Mammary epithelial cell (primary cell): ENCODE measurements at regions of chr22 and their contacts with region 1.

Region 1: GRCh38 chr22:49106096-49106841 is 721.4 kb downstream of the BRD1 start:
- DNase-seq: no peak
- H3K4me3 ChIP-seq: no peak overlapping the region
- H3K27ac ChIP-seq: no peak overlapping the region
- H3K4me1 ChIP-seq: no peaks in the 10 kb centered on the region
- H3K27me3 ChIP-seq: no peaks in the 10 kb centered on the region
- CTCF ChIP-seq: no peak

Region 2: DNA sequence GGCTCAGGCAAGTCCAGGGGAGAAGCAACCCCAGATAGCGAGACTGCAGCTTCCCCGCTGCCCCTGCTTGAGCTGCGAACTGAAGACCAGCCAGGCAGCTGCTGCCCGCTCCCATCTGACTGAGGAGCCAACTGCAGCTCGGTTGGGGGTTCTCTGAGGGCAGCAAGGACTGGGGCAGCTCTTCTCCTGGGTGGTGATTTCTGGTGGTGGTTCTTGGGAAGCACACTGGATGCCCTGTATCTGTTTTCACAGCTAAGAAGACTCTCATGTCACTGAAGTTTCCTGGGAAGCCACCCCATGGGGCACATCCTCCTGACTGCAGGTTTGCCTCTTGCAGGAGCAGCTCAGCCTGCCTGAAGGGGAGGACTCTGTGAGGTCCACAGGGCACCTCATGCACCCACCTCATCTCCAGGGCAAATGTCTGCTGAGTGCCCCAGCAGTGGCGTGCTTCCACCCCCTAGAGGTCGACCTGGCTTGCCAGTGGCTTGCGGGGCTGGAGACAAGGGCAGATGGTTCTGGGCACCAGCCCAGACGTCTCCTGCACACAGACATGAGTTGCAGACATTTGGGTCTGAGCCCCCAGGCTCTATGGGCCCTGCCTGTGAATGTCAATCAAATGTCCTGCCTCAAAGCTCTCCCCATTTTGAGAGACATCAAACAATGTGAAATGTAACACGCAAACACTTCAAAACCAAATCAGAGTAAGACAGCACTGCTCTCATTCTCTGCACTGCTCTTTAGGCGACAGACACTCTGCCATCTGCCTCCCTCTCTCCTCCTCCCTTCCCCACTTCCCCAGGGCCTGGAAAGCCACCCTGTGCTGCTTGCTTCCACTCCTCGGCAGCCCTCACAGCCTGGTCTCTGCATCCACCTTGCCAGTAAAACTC is 79.5 kb before region 1 on chr22:
- CTCF ChIA-PET with region 1: no interaction called
- dilution Hi-C with region 1: no loop called
- in situ Hi-C with region 1: no loop called
- intact Hi-C with region 1: no loop called
- DNase-seq: no peak
- H3K4me3 ChIP-seq: no peak overlapping the region
- H3K27ac ChIP-seq: no peak overlapping the region
- H3K4me1 ChIP-seq: no peaks in the 10 kb centered on the region
- H3K27me3 ChIP-seq: no peaks in the 10 kb centered on the region
- CTCF ChIP-seq: no peak

Region 3: DNA sequence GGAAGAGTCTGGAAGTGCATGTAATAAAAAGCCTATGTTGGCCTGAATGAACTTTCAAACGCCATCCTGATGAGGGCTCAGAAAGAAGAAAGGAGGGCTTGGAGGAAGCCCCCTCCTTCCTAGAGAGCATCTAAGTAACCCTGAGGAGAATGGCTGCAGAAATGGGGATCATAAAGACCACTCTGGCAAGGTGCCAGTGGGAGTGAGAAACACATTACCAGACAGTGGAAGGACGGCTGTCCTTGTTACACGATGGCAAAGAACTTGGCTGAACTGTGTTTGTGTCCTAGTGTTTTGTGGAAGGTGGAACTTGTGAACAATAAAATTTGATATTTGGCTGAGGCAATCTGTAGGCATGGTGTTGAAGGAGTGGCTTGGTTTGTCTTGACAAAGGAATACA is 69.6 kb after region 1 on chr22:
- CTCF ChIA-PET with region 1: no interaction called
- dilution Hi-C with region 1: no loop called
- in situ Hi-C with region 1: no loop called
- intact Hi-C with region 1: no loop called
- DNase-seq: no peak
- H3K4me3 ChIP-seq: no peak overlapping the region
- H3K27ac ChIP-seq: no peak overlapping the region
- H3K4me1 ChIP-seq: no peaks in the 10 kb centered on the region
- H3K27me3 ChIP-seq: no peaks in the 10 kb centered on the region
- CTCF ChIP-seq: no peak

Region 4: GRCh38 chr22:49186762-49187161 is 80.5 kb after region 1 on chr22:
- CTCF ChIA-PET with region 1: no interaction called
- dilution Hi-C with region 1: loop called (anchors 5 kb)
- in situ Hi-C with region 1: no loop called
- intact Hi-C with region 1: no loop called
- DNase-seq: no peak
- H3K4me3 ChIP-seq: no peak overlapping the region
- H3K27ac ChIP-seq: no peak overlapping the region
- H3K4me1 ChIP-seq: no peaks in the 10 kb centered on the region
- H3K27me3 ChIP-seq: no peaks in the 10 kb centered on the region
- CTCF ChIP-seq: no peak

Region 5: DNA sequence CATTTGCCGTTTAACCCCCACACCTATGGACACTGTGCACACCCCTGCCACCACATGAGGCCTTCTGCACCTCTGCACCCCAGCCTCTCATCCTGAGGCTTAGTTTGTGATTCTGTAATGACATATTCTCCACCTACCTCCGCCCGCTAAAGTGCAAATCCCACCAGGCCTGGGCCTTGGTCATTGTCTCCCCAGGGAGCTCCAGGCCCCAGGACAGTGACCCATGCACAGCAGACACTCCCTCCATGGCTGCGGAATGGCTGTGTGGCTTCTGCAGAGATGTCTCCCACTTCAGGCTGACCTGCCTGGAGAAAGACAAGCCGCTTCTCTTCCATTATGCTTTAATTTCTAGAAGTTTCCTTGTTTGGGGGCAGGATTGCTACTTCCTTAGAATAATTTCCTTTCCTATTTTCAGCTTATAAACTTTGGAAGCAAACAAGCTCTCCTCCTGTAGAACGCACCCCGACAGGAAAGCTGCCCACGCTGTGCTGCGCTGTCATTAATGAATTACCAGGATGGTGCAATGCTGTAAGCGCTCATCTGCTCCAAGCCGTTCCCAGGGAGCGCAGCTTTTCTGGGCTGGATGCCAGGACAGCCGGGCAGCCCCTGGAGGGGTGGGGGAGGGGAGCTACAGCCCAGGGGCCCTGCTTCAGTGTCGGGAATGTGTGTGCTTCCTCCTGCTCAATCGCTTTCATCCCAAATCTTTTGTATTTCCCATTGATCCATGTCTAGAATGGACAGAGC is 103.4 kb after region 1 on chr22:
- CTCF ChIA-PET with region 1: no interaction called
- dilution Hi-C with region 1: no loop called
- in situ Hi-C with region 1: no loop called
- intact Hi-C with region 1: no loop called
- DNase-seq: no peak
- H3K4me3 ChIP-seq: no peak overlapping the region
- H3K27ac ChIP-seq: no peak overlapping the region
- H3K4me1 ChIP-seq: no peaks in the 10 kb centered on the region
- H3K27me3 ChIP-seq: no peaks in the 10 kb centered on the region
- CTCF ChIP-seq: no peak